ENCODE measurements at regions of chr5 and their contacts with region 1.

Region 1: GRCh38 chr5:140261403-140262171 is 41.3 kb downstream of the PFDN1 start:
- DNase-seq: peak; percentile 73 to 76
- H3K4me3 ChIP-seq: no peak overlapping the region
- H3K4me3 Mint-ChIP-seq: peak overlapping the region; percentile 12
- H3K27ac Mint-ChIP-seq: peak overlapping the region; percentile 64
- H3K4me1 ChIP-seq: peaks cover 11% of the 10 kb centered on the region
- H3K4me1 Mint-ChIP-seq: peaks cover 35% of the 10 kb centered on the region
- H3K27me3 ChIP-seq: no peaks in the 10 kb centered on the region
- H3K27me3 Mint-ChIP-seq: no peaks in the 10 kb centered on the region
- CTCF ChIP-seq: peak in 1 of 2 experiments; percentile 11

Region 2: DNA sequence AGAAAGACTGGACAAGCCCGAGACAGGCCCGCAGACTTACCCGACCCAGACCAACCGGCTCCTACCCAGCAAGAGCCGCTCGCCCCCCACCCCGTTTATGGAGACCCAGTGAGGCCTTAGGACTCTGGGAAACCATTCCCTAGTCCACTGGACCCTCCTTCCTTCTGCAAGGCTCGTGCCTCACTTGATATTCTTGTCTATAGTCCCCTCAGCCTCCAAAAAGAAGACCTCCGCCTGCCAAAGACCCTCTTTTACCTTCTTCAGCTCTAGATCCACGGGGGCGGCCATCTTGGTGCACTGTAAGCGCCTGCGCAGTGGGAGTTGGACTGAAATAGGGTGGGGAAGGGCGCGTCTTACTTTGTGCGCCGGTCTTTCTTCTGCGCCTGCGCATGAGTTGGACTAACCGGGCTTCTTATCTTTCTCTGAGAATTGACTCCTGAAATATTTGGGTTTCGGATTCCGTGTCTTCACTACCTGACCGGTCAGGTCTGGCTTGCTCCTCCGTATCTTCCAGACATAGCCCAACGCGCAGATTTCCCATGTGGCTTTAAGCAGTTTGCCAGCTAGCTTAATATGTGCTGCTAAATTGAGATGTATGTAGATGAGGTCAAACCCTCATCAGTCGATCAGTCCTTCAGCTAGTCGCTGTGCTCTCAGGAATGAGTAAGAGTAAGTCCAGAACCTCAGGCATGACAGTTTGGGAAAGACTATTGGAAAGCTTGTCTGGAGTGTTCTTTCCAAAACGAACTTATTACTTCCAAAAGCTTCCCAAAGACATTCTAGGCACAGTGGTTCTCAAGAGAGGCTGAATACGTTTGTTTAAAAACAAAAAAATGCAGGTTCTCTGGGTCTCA is 41.4 kb after region 1 on chr5 and contains the start of gene PFDN1:
- CTCF ChIA-PET with region 1: interaction called, 5 read pairs
- POLR2A ChIA-PET with region 1: interaction called, 6 read pairs
- intact Hi-C with region 1: loop called (anchors 1 kb)
- DNase-seq: peak; percentile 95 to 97
- H3K4me3 ChIP-seq: peak within 1 kb of the TSS; percentile 56
- H3K4me3 Mint-ChIP-seq: peak within 1 kb of the TSS; percentile 100
- H3K27ac Mint-ChIP-seq: peak within 1 kb of the TSS; percentile 100
- H3K4me1 ChIP-seq: peaks cover 19% of the 10 kb centered on the region
- H3K4me1 Mint-ChIP-seq: peaks cover 7% of the 10 kb centered on the region
- H3K27me3 ChIP-seq: no peaks in the 10 kb centered on the region
- H3K27me3 Mint-ChIP-seq: no peaks in the 10 kb centered on the region
- CTCF ChIP-seq: no peak
- total RNA-seq, gene PFDN1: 81.1 and 82.3 TPM in 2 replicates